IMR-90 (cell line): ENCODE measurements at regions of chr1 and their contacts with region 1.

Region 1: DNA sequence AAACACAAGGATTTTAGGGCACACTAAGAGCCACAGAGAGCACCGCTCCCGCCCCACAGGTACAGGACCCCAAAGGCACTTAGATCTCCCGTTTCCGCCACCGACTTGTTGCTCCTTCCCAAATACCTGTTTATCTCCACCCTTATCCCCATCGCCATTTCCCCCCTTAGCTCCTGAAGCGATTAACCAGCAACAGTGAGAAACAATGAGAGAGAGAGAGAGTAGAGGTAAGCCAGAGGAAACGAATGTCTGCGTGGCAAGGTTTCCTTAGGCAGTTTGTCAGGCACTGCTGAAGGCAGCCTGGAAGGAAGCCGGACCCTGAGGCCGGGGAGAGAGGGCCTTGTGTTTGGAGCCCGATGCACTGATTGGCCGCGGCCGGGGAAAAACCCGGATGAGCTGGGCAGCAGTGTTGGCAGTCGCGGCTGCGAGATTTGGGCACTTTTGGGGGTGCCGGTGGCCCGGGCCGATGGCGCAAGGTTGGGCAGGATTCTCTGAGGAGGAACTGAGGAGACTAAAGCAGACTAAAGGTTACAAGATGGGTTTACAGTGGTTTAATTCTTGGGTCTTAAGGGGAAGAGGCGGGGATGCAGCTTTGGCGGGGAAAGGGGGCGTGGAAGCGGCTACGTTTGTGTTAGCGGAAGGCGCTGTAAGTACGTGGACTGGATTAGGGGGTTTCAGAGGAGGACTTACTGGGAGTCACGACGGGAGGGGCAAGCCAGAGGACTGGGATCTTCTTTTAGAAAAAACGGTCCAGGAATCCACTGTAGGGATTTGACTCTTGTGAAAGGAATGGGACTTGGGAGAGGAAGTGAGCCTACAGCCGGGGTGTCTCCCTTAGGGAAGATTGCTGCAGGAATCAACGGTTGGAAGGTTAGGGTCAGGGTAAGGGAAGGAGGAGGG is at the start of gene GORAB:
- DNase-seq: peak; percentile 97
- ATAC-seq: peak; percentile 96
- H3K4me3 ChIP-seq: peak within 1 kb of the TSS; percentile 62
- H3K27ac ChIP-seq: peak within 1 kb of the TSS; percentile 85
- H3K4me1 ChIP-seq: no peaks in the 10 kb centered on the region; the same call in 1 of the 2 replicates
- H3K27me3 ChIP-seq: no peaks in the 10 kb centered on the region
- CTCF ChIP-seq: no peak
- POLR2A ChIP-seq: peak; percentile 95
- RAD21 ChIP-seq: peak; percentile 35
- total RNA-seq, gene GORAB: 11.3 and 17.2 TPM in 2 replicates

Region 2: DNA sequence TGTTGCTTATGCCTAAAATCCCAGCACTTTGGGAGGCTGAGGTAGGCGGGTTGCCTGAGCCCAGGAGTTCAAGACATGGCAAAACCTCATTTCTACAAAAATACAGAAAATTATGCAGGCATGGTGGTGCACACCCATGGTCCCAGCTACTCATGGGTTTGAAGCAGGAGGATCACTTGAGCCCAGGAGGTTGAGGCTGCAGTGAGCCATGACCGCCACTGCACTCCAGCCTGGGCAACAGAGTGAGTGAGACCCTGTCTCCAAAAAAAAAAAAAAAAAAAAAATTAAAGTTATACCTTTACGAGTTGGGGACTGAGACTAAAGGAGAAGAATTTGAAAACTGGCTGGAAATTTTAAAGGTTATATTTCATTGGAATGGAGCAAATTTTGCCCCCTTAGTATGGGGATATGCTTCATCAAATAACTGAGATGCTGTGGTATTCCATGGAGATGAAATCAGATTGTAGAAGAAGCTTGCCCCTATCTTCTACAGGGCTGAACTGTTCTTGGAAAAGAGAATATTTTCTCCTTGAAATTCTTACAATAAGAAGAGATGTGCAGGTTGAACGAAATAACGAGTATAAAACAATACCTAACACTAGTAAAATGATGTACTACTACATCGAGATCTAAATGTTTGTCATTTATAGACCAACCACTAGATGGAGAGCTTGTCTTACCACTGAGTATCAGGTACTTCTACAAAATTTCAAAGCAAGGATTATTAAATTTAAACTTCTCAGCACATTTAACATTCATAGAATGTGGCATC is 603.4 kb before region 1 on chr1:
- CTCF ChIA-PET with region 1: no interaction called
- POLR2A ChIA-PET with region 1: no interaction called
- dilution Hi-C with region 1: no loop called
- in situ Hi-C with region 1: no loop called
- intact Hi-C with region 1: loop called (anchors 5 kb)
- DNase-seq: peak; percentile 72
- ATAC-seq: peak; percentile 80; the same call in 1 of the 2 replicates
- H3K4me3 ChIP-seq: no peak overlapping the region
- H3K27ac ChIP-seq: no peak overlapping the region
- H3K4me1 ChIP-seq: no peaks in the 10 kb centered on the region; the same call in 1 of the 2 replicates
- H3K27me3 ChIP-seq: no peaks in the 10 kb centered on the region
- CTCF ChIP-seq: peak; percentile 87
- POLR2A ChIP-seq: peak; percentile 38; the same call in 1 of the 2 replicates
- RAD21 ChIP-seq: peak; percentile 90

Region 3: GRCh38 chr1:170074250-170075157 is 457.5 kb before region 1 on chr1 and contains the start of gene KIFAP3:
- CTCF ChIA-PET with region 1: no interaction called
- POLR2A ChIA-PET with region 1: no interaction called
- dilution Hi-C with region 1: no loop called
- in situ Hi-C with region 1: no loop called
- intact Hi-C with region 1: loop called (anchors 5 kb)
- DNase-seq: peak; percentile 96
- ATAC-seq: peak; percentile 100
- H3K4me3 ChIP-seq: peak within 1 kb of the TSS; percentile 76
- H3K27ac ChIP-seq: peak within 1 kb of the TSS; percentile 39
- H3K4me1 ChIP-seq: no peaks in the 10 kb centered on the region
- H3K27me3 ChIP-seq: no peaks in the 10 kb centered on the region
- CTCF ChIP-seq: peak; percentile 52
- POLR2A ChIP-seq: peak; percentile 39; the same call in 1 of the 2 replicates
- RAD21 ChIP-seq: peak; percentile 43
- total RNA-seq, gene KIFAP3: 10.9 and 22.2 TPM in 2 replicates

Region 4: GRCh38 chr1:170214117-170215032 is 317.6 kb before region 1 on chr1:
- CTCF ChIA-PET with region 1: no interaction called
- POLR2A ChIA-PET with region 1: no interaction called
- dilution Hi-C with region 1: no loop called
- in situ Hi-C with region 1: no loop called
- intact Hi-C with region 1: loop called (anchors 10 kb)
- DNase-seq: peak; percentile 28
- ATAC-seq: peak; percentile 75
- H3K4me3 ChIP-seq: no peak overlapping the region
- H3K27ac ChIP-seq: no peak overlapping the region
- H3K4me1 ChIP-seq: no peaks in the 10 kb centered on the region
- H3K27me3 ChIP-seq: no peaks in the 10 kb centered on the region
- CTCF ChIP-seq: no peak
- POLR2A ChIP-seq: no peak
- RAD21 ChIP-seq: no peak

Region 5: GRCh38 chr1:170321113-170321512 is 210.9 kb before region 1 on chr1:
- CTCF ChIA-PET with region 1: no interaction called
- POLR2A ChIA-PET with region 1: no interaction called
- dilution Hi-C with region 1: no loop called
- in situ Hi-C with region 1: no loop called
- intact Hi-C with region 1: no loop called
- DNase-seq: peak; percentile 53
- ATAC-seq: no peak; the same call in 1 of the 2 replicates
- H3K4me3 ChIP-seq: no peak overlapping the region
- H3K27ac ChIP-seq: no peak overlapping the region
- H3K4me1 ChIP-seq: no peaks in the 10 kb centered on the region
- H3K27me3 ChIP-seq: no peaks in the 10 kb centered on the region
- CTCF ChIP-seq: no peak
- POLR2A ChIP-seq: no peak
- RAD21 ChIP-seq: no peak

Region 6: DNA sequence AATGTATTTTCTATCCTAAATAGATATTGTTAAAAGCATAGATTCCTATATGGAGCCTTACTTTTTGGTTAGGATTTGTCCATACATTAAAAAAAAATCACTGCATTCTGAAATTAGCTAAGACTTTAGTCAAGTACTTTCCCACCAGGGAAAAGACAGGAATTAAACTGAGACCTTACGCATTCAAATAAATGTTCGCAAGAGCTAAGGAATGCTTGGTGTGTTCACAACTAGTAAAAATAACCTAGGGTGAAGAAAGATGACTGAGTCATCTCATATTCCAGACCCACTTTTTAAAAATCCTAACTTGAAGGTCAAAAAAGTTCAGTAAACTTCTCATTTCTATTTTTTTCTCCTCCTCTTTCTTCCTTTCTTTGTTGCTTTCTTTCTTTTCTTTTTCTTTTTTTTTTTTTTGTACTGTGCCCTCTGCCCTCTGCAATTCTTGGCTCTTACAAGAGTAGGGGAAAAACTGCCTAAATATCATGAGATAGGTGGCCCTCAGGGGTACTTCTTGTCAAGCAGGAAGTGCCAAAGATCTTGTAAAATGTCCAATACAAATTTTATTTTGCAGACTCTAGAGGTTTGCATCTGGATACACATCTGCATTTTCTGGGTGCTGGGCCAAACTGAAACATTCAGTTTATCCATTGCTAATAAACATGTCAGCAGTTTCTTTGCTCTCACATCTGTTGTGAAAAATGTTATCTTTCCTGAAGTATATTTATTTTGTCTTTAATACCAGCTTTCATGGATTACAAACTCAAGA is 121.4 kb before region 1 on chr1:
- CTCF ChIA-PET with region 1: no interaction called
- POLR2A ChIA-PET with region 1: no interaction called
- dilution Hi-C with region 1: no loop called
- in situ Hi-C with region 1: no loop called
- intact Hi-C with region 1: loop called (anchors 5 kb)
- DNase-seq: peak; percentile 86
- ATAC-seq: peak; percentile 78
- H3K4me3 ChIP-seq: no peak overlapping the region
- H3K27ac ChIP-seq: peak overlapping the region; percentile 95; the same call in 1 of the 2 replicates
- H3K4me1 ChIP-seq: peaks cover 8% of the 10 kb centered on the region
- H3K27me3 ChIP-seq: no peaks in the 10 kb centered on the region
- CTCF ChIP-seq: no peak
- POLR2A ChIP-seq: no peak
- RAD21 ChIP-seq: no peak

Region 7: DNA sequence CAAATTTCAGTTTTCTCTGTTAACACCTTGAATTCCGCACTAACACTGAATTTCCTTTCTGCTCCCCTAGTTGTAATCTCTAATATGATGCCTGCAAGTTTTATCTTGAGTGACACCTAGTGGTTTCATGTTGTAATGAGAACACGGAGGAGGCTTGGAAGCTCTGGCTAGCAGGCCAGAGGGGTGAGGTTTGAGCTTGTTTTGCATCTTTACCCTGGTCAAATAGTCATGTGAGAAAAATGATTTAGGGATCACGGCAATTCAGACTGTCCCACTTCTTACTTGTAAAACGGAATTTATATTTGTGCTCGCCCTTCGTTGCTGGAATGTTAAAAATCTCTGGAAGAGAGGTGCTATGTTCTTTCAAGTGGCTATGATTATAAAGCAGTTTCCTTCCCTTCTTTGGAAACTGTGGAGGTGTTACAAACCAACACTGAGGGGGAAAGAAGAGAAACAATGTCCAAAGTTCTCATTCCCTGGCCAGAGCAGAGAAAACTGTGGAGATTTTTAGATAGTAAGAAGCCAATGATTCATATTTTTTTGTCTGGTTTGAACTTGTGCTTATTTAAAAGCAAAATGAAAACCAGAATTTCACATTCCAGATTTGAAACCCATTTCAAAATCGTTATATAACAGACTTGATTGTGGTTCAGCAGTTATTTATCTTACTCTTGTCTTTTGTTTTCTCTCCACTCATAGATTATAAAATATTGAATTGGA is 398.0 kb after region 1 on chr1:
- CTCF ChIA-PET with region 1: no interaction called
- POLR2A ChIA-PET with region 1: no interaction called
- dilution Hi-C with region 1: no loop called
- in situ Hi-C with region 1: no loop called
- intact Hi-C with region 1: loop called (anchors 5 kb)
- DNase-seq: peak; percentile 66
- ATAC-seq: peak; percentile 98
- H3K4me3 ChIP-seq: no peak overlapping the region
- H3K27ac ChIP-seq: no peak overlapping the region
- H3K4me1 ChIP-seq: no peaks in the 10 kb centered on the region
- H3K27me3 ChIP-seq: no peaks in the 10 kb centered on the region; the same call in 1 of the 2 replicates
- CTCF ChIP-seq: peak; percentile 76
- POLR2A ChIP-seq: no peak
- RAD21 ChIP-seq: peak; percentile 79